ENCODE measurements at regions of chr19 and their contacts with region 1.

Region 1: DNA sequence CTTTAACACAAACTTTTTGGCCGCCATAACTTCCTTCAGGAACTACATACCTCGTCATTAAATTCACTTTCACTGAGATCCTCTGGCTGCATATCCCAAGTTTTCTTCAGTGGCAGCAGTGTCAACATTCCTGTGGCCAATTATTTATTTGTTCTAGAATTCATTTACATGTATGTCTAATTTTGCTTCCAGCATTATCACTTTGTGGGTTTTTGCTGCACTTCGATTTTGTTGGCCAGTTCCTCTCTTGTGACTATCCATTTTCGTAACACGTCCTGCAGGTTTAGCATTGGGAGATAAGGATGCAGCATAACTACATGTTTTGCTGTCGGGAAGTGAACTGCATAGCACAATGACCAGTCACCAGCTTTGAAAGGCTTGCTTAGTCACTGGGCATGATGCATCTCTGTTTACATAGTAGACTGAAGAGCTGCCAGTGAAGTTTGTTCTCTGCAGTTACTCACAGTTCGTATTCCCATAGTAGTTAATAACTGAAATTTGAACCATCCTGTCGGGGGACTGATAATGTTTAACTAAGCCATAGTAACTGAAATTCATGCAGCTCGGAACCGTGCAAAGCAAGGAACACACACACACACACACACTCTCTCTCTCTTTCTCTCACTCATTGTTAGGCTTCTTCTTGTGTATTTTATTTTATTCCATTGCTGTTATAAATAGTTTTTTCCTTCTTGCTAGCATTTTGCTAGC is 28.3 kb downstream of the ZNF507 start:
- DNase-seq: peak in 1 of 2 donors; percentile 71
- H3K4me3 ChIP-seq: no peak overlapping the region
- H3K27ac ChIP-seq: peak overlapping the region; percentile 68 to 74
- H3K4me1 ChIP-seq: peaks cover 0 to 12% of the 10 kb centered on the region in 2 donors
- H3K27me3 ChIP-seq: no peaks in the 10 kb centered on the region
- CTCF ChIP-seq: no peak

Region 2: DNA sequence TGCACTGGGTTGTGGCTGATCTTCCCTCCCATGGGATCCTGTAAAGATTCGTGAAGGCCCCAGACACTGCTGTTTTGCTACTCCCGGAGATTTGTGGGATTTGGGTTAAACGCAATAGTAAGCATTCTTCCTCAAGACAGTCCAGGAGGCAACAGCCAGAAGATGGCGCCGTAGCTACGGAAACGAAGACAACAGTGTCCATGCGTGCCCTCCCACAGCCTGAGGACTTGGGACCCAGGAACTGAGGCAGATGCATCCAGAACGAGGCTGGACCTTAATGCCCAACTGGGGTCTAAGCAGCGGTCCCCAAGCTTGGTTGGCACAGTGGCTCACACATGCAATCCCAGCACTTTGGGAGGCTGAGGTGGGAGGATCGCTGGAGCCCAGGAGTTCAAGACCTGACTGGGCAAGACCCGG is 85.9 kb before region 1 on chr19:
- intact Hi-C with region 1: loop called (anchors 5 kb)
- DNase-seq: peak in 1 of 2 donors; percentile 75
- H3K4me3 ChIP-seq: no peak overlapping the region
- H3K27ac ChIP-seq: no peak overlapping the region
- H3K4me1 ChIP-seq: no peaks in the 10 kb centered on the region
- H3K27me3 ChIP-seq: no peaks in the 10 kb centered on the region
- CTCF ChIP-seq: peak in 2 of 3 experiments; percentile 30 to 47

Region 3: GRCh38 chr19:32307591-32307990 is 66.1 kb before region 1 on chr19:
- intact Hi-C with region 1: no loop called
- DNase-seq: no peak
- H3K4me3 ChIP-seq: no peak overlapping the region
- H3K27ac ChIP-seq: no peak overlapping the region
- H3K4me1 ChIP-seq: no peaks in the 10 kb centered on the region
- H3K27me3 ChIP-seq: no peaks in the 10 kb centered on the region
- CTCF ChIP-seq: no peak

Region 4: GRCh38 chr19:32318880-32319520 is 54.7 kb before region 1 on chr19:
- intact Hi-C with region 1: no loop called
- DNase-seq: no peak
- H3K4me3 ChIP-seq: no peak overlapping the region
- H3K27ac ChIP-seq: no peak overlapping the region
- H3K4me1 ChIP-seq: no peaks in the 10 kb centered on the region
- H3K27me3 ChIP-seq: no peaks in the 10 kb centered on the region
- CTCF ChIP-seq: peak in 1 of 3 experiments; percentile 36

Region 5: DNA sequence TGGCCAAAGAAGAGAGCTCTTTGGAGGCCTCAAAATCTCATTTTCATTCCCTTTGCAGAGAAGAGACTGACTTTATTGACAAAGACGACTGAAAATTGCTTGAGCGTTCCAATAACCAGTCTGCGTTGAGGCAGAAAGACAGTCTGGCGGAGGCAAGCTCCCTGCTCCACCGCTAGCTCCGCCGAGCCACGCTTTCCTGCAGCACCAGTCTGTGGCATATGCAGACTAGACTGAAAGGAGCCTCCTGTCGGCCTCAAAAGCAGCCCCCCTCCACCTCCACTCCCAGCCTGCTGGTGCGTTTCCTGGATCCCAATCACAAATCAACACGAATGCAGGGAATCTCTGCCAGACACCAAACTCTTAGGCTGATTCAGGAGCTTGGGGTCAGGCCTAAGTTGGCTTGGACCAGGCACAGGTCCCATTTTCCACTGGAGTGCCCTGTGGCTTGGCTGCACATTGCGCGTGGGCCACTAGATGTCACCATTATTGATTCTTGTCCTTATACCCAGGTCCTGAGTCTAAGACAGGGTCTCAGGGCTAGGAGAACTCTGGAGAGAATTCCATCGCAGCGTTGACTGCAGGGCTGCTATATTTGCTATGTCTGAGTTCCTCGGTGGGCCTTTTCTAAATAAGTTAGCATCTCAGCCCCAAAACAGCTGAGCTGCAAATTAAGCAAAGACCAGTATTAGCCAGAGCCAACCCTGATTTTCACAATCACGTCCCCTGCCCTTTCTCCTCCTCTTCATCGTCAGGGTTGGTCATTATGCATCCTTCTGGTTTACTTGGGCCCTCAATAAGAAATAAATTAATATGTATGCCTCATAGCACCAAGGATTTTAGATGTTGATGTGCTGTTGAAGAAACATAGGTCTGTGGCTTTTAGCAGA is 33.5 kb before region 1 on chr19:
- intact Hi-C with region 1: loop called (anchors 5 kb)
- DNase-seq: peak in 1 of 2 donors; percentile 87
- H3K4me3 ChIP-seq: no peak overlapping the region
- H3K27ac ChIP-seq: peak overlapping the region; percentile 2 to 29
- H3K4me1 ChIP-seq: peaks cover 0 to 6% of the 10 kb centered on the region in 2 donors
- H3K27me3 ChIP-seq: no peaks in the 10 kb centered on the region
- CTCF ChIP-seq: peak; percentile 52 to 86 (median 71)

Region 6: GRCh38 chr19:32352241-32352630 is 21.5 kb before region 1 on chr19:
- intact Hi-C with region 1: loop called (anchors 2 kb)
- DNase-seq: no peak
- H3K4me3 ChIP-seq: peak overlapping the region in 1 of 2 donors; percentile 27
- H3K27ac ChIP-seq: peak overlapping the region; percentile 66 to 91
- H3K4me1 ChIP-seq: peaks cover 4 to 38% of the 10 kb centered on the region in 2 donors
- H3K27me3 ChIP-seq: no peaks in the 10 kb centered on the region
- CTCF ChIP-seq: no peak

Region 7: GRCh38 chr19:32405431-32406161 is 31.9 kb after region 1 on chr19 and contains the start of gene DPY19L3:
- intact Hi-C with region 1: loop called (anchors 5 kb)
- DNase-seq: peak; percentile 81 to 97
- H3K4me3 ChIP-seq: peak within 1 kb of the TSS; percentile 93 to 94
- H3K27ac ChIP-seq: peak within 1 kb of the TSS; percentile 99 to 100
- H3K4me1 ChIP-seq: peaks cover 0 to 14% of the 10 kb centered on the region in 2 donors
- H3K27me3 ChIP-seq: no peaks in the 10 kb centered on the region
- CTCF ChIP-seq: no peak
- total RNA-seq, gene DPY19L3: 115 TPM

Region 8: GRCh38 chr19:32450217-32450616 is 76.5 kb after region 1 on chr19:
- intact Hi-C with region 1: no loop called
- DNase-seq: no peak
- H3K4me3 ChIP-seq: no peak overlapping the region
- H3K27ac ChIP-seq: no peak overlapping the region
- H3K4me1 ChIP-seq: no peaks in the 10 kb centered on the region
- H3K27me3 ChIP-seq: no peaks in the 10 kb centered on the region
- CTCF ChIP-seq: no peak

Region 9: GRCh38 chr19:32475141-32476031 is 101.6 kb after region 1 on chr19:
- intact Hi-C with region 1: no loop called
- DNase-seq: no peak
- H3K4me3 ChIP-seq: no peak overlapping the region
- H3K27ac ChIP-seq: no peak overlapping the region
- H3K4me1 ChIP-seq: no peaks in the 10 kb centered on the region
- H3K27me3 ChIP-seq: no peaks in the 10 kb centered on the region
- CTCF ChIP-seq: no peak